GM13976 (cell line): ENCODE measurements at regions of chr6 and their contacts with region 1.

Region 1: GRCh38 chr6:7725849-7726415 is at the start of gene BMP6:
- DNase-seq: peak; percentile 89
- CTCF ChIP-seq: no peak

Region 2: DNA sequence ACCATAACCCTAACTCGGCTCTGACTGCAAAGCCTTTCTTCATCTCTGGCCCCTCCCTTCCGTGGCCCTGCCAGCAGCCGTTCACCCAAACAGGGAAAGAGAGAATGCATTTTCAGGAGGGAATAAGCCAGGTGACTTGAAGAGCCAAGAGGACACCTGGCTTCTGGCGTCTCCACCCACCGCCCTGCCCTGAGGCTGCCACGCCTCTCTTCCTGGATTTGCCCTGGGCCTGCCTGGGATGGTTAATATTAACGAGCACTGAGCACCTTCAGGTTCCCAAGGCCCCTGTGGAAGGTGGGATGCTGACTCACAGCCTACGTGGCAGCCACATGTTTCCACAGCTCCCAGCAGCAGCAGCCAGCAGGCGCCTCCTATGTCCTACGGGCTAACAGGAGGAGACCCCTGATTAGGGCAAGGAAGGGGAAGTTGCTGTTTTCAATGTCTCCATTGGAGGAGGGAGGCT is 756.1 kb before region 1 on chr6:
- in situ Hi-C with region 1: no loop called
- DNase-seq: no peak
- CTCF ChIP-seq: no peak

Region 3: DNA sequence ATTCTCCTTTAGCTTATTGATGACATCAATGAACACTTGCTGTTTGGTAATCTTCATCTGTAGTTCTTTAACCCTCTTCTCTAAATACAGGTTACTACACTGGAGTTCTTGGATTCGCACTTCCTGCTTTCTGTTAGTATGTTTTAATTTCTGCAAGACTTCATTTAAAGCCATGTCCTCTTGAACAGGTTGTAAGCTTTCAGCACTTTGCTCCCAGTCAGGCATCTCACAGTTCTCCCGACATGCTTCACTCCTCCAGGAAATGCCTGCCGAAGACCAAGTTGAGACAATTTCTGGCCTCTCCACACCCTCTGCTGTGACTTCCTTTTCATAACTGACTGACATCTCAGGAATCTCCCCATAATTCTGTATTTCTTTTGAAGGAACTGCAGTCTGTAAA is 352.2 kb before region 1 on chr6:
- in situ Hi-C with region 1: no loop called
- DNase-seq: no peak
- CTCF ChIP-seq: no peak

Region 4: DNA sequence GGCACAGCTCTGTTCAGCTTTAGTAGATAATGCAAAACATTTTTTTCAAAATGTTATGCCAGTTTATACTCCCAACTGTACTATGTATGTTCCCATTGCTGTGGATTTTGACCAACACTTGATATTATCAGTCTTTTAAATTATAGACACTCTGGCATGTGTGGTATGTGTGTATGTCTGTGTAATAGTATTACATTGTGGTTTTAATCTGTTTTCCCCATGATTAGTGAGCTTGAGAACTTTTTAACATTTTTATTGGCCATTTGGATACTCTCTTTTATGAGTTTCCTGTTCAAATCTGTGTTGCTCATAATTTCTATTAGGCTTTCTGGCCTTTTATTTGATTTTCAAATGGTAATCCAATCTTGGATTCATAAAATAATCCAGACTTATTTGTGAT is 253.9 kb after region 1 on chr6:
- in situ Hi-C with region 1: loop called (anchors 10 kb)
- DNase-seq: no peak
- CTCF ChIP-seq: no peak

Region 5: GRCh38 chr6:8219352-8219943 is 493.5 kb after region 1 on chr6:
- in situ Hi-C with region 1: loop called (anchors 25 kb)
- DNase-seq: peak; percentile 55
- CTCF ChIP-seq: peak; percentile 51